Psoas muscle (tissue), 8 donors: ENCODE measurements at regions of chr11 and their contacts with region 1.

Region 1: GRCh38 chr11:2314525-2315394 is 12.9 kb downstream of the TSPAN32 start:
- DNase-seq: peak; percentile 71 to 81
- ATAC-seq: peak; percentile 43 to 78 (median 60)
- H3K4me3 ChIP-seq: no peak overlapping the region
- H3K27ac ChIP-seq: no peak overlapping the region
- H3K4me1 ChIP-seq: peaks cover 5% of the 10 kb centered on the region
- H3K27me3 ChIP-seq: peaks cover 0 to 2% (median 0%) of the 10 kb centered on the region in 3 donors
- CTCF ChIP-seq: no peak

Region 2: DNA sequence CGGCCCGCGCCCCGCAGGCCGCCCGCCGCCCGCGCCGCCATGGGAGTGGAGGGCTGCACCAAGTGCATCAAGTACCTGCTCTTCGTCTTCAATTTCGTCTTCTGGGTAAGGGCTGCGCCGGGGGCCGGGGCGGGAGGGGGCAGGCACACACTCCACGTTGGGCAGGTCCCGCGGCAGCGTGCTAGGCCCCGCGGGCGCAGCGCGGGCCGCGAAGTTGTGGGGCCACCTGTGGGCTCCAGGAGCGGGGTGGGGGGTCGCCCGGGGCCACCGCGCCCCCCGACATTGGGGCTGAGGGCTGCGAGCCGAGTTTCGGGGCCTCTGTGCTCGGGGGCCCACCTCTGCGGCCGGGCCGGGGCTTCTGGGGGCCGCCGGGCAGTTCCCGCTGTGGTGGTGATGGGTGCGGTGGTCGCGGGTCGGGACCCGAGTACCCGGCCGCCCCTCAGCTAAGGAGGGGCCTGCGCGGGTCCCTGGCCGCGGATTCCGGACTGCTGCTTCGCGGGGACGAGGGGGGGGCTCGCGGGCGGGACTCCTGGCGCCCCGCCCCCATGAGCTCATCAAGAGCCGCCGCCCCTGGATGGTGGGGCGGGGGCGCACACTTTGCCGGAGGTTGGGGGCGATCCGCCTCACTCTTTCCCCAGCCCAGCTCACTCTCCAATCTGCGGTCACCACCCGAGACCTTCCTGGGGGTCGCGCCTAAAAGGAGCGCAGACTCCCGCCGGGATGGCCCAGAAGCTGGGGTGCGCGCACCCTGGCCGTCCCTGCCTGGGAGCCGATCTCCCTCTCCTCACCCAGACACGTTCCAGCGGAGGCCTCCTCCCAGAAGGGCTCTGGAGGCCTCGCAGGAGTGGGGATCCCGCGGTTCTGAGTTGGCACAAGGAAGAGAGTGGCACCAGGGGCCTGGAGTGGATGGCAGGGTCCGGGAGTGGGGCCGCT is 63.0 kb after region 1 on chr11:
- intact Hi-C with region 1: loop called in 1 of 2 experiments (anchors 5 kb)
- DNase-seq: peak; percentile 78 to 83
- ATAC-seq: peak; percentile 35 to 70 (median 54)
- H3K4me3 ChIP-seq: peak overlapping the region; percentile 93
- H3K27ac ChIP-seq: peak overlapping the region; percentile 85
- H3K4me1 ChIP-seq: peaks cover 39% of the 10 kb centered on the region
- H3K27me3 ChIP-seq: no peaks in the 10 kb centered on the region
- CTCF ChIP-seq: no peak